ENCODE measurements at regions of chr19 and their contacts with region 1.

Region 1: GRCh38 chr19:18058208-18059030 is 28.3 kb downstream of the IL12RB1 start:
- DNase-seq: no peak
- ATAC-seq: peak; percentile 97
- H3K4me3 ChIP-seq: no peak overlapping the region
- H3K27ac ChIP-seq: no peak overlapping the region
- H3K4me1 ChIP-seq: peaks cover 2% of the 10 kb centered on the region; the same call in 1 of the 2 replicates
- H3K27me3 ChIP-seq: no peaks in the 10 kb centered on the region; a peak in 1 of 4 replicates
- CTCF ChIP-seq: peak; percentile 77 to 86 (median 84)
- EP300 ChIP-seq: no peak
- POLR2A ChIP-seq: no peak
- RAD21 ChIP-seq: peak; percentile 95

Region 2: DNA sequence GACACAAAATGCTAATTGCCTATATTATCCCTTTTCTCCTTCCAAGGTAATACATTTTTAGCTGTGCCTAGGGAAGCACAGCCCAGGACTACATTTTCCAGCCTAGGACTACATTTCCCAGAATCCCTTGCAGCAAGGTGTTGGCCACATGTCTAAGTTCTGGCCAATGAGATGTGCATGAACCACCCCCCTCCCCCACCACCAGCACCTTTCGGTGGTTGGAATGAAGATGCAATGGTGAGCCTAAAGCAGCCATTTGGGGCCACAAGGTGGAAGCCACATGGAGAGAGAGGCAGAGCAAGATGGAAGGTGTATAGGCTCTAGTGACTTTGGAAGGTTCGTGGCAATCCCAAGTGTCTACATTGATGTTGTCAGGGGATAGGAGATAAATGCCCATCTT is 386.5 kb before region 1 on chr19:
- CTCF ChIA-PET with region 1: no interaction called
- POLR2A ChIA-PET with region 1: no interaction called
- RAD21 ChIA-PET with region 1: no interaction called
- SMC1A ChIA-PET with region 1: no interaction called
- in situ Hi-C with region 1: no loop called
- intact Hi-C with region 1: no loop called
- DNase-seq: no peak
- ATAC-seq: peak; percentile 63
- H3K4me3 ChIP-seq: no peak overlapping the region
- H3K27ac ChIP-seq: no peak overlapping the region
- H3K4me1 ChIP-seq: no peaks in the 10 kb centered on the region
- H3K27me3 ChIP-seq: no peaks in the 10 kb centered on the region
- CTCF ChIP-seq: no peak
- EP300 ChIP-seq: no peak
- POLR2A ChIP-seq: no peak
- RAD21 ChIP-seq: no peak

Region 3: GRCh38 chr19:17938092-17938845 is 120.2 kb before region 1 on chr19:
- CTCF ChIA-PET with region 1: interaction called, 12 read pairs
- POLR2A ChIA-PET with region 1: no interaction called
- RAD21 ChIA-PET with region 1: interaction called, 4 read pairs
- SMC1A ChIA-PET with region 1: interaction called, 10 read pairs
- in situ Hi-C with region 1: no loop called
- intact Hi-C with region 1: loop called (anchors 2 kb)
- DNase-seq: no peak
- ATAC-seq: peak; percentile 99
- H3K4me3 ChIP-seq: no peak overlapping the region
- H3K27ac ChIP-seq: no peak overlapping the region
- H3K4me1 ChIP-seq: no peaks in the 10 kb centered on the region; the same call in 1 of the 2 replicates
- H3K27me3 ChIP-seq: no peaks in the 10 kb centered on the region
- CTCF ChIP-seq: peak; percentile 95 to 98 (median 96)
- EP300 ChIP-seq: no peak
- POLR2A ChIP-seq: no peak
- RAD21 ChIP-seq: peak; percentile 94

Region 4: DNA sequence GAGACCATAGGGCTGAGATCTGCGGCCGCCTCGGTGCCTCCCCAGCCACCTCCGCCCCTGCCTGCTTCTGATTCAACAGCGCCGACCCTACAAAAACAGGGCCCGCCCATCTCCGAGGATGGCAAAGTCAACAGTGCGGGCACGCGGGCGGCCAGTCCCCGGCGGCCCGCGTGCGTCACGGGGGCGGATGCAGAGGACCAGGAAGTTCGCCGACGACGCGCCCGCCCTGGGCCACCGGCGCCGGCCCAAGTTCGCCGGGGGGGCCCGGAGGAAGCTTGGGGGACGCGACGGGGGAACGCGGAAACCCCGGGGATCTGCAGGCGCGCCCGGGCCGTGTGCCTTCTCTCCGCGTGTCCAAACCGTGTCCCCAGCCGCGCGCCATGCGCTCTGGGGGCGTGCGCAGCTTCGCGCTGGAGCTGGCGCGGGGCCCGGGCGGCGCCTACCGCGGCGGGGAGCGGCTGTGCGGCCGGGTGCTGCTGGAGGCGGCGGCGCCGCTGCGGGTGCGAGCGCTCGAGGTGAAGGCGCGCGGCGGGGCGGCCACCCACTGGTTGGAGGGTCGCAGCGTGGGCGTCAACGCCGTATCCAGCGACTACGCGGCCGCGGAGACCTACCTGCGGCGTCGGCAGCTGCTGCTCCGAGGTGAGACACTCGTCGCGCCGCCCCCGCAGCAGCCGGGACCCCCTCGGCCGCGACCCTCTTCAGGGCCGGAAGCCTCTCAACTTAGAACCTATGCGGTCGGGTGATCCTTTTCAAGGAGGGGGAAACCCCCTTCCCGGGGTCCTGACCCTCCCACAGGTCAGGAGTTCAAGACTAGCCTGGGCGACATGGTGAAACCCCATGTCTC is 57.3 kb before region 1 on chr19:
- CTCF ChIA-PET with region 1: interaction called, 81 read pairs
- POLR2A ChIA-PET with region 1: interaction called, 11 read pairs
- RAD21 ChIA-PET with region 1: interaction called, 4 read pairs
- SMC1A ChIA-PET with region 1: interaction called, 6 read pairs
- in situ Hi-C with region 1: no loop called
- intact Hi-C with region 1: no loop called
- DNase-seq: no peak
- ATAC-seq: peak; percentile 84
- H3K4me3 ChIP-seq: peak overlapping the region; percentile 75
- H3K27ac ChIP-seq: peak overlapping the region; percentile 62
- H3K4me1 ChIP-seq: peaks cover 5% of the 10 kb centered on the region; the same call in 1 of the 2 replicates
- H3K27me3 ChIP-seq: no peaks in the 10 kb centered on the region
- CTCF ChIP-seq: no peak
- EP300 ChIP-seq: no peak
- POLR2A ChIP-seq: peak; percentile 81
- RAD21 ChIP-seq: no peak

Region 5: DNA sequence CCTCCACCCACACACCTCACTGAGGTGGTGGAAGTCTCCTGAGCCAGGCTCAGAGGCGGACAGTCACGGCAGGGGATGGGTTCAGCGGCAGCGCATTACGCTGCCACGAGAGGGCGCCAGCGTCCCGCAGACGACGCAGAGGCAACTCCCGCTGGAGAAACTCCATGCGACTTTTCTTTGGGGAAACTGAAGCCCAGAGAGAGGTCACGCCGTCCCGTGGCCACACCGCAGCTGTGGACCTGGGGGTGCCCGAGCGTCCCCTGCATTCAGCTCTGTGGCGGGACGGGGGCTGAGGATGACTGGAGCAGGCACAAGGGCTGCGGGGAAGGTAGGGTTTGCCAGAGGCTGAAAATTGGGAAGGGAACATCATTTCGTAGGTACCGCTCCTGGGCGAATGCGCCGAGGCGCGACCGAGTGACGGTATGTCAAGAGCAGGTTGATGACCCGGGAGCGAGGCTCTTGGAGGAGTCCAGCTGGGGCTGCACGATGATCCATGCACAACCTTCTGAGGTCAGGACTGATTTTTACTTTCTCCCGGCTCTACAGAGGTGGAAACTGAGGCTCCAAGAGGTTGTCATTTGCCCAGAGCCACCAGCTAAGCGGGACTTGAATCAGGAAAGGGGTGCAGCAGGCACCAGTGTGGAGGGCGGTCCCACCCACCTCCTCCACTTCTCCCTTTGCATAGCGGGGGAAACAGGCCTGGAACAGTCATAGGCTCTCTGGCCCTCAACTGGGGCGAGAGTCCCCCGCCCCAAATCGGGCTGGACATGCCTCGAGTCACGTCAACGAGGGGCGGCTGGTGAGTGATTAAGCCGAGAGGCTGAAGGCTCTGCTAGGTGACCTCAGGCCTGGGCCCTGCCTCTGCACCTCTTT is 51.1 kb before region 1 on chr19:
- CTCF ChIA-PET with region 1: interaction called, 81 read pairs
- POLR2A ChIA-PET with region 1: interaction called, 3 read pairs
- RAD21 ChIA-PET with region 1: interaction called, 7 read pairs
- SMC1A ChIA-PET with region 1: interaction called, 21 read pairs
- in situ Hi-C with region 1: no loop called
- intact Hi-C with region 1: loop called (anchors 1 kb)
- DNase-seq: no peak
- ATAC-seq: peak; percentile 95
- H3K4me3 ChIP-seq: peak overlapping the region; percentile 45
- H3K27ac ChIP-seq: no peak overlapping the region
- H3K4me1 ChIP-seq: peaks cover 22% of the 10 kb centered on the region
- H3K27me3 ChIP-seq: no peaks in the 10 kb centered on the region
- CTCF ChIP-seq: peak; percentile 95 to 99 (median 98); a peak in 5 of 6 replicates
- EP300 ChIP-seq: no peak
- POLR2A ChIP-seq: no peak; the same call in 1 of the 2 replicates
- RAD21 ChIP-seq: peak; percentile 89

Region 6: GRCh38 chr19:18021121-18021755 is 37.2 kb before region 1 on chr19:
- CTCF ChIA-PET with region 1: interaction called, 5 read pairs
- POLR2A ChIA-PET with region 1: interaction called, 5 read pairs
- RAD21 ChIA-PET with region 1: no interaction called
- SMC1A ChIA-PET with region 1: interaction called, 3 read pairs
- in situ Hi-C with region 1: loop called (anchors 5 kb)
- intact Hi-C with region 1: no loop called
- DNase-seq: no peak
- ATAC-seq: peak; percentile 50
- H3K4me3 ChIP-seq: peak overlapping the region; percentile 66; the same call in 1 of the 2 replicates
- H3K27ac ChIP-seq: peak overlapping the region; percentile 48
- H3K4me1 ChIP-seq: peaks cover 17% of the 10 kb centered on the region
- H3K27me3 ChIP-seq: no peaks in the 10 kb centered on the region
- CTCF ChIP-seq: no peak
- EP300 ChIP-seq: no peak
- POLR2A ChIP-seq: no peak; the same call in 1 of the 2 replicates
- RAD21 ChIP-seq: no peak

Region 7: DNA sequence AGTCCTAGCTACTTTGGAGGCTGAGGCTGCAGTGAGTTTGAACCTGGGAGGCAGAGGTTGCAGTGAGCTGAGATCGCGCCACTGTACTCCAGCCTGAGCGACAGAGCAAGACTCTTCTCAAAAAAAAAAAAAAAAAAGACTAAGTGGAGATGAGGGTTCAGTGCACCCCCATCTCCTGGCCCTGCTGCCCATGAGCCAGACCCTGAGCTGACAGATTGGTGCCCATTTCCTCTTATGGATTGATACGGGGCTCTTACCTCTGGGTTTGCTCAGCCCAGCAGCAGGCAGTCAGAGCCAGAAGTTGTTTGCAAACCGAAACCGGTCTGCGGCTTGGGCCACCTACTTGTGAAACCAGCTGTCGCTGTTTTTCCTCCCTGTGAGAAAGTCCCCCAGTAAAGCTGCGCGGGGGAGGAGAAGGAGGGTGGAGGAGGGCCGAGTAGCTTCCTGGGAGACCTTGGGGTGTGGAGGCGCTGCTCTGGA is 13.6 kb before region 1 on chr19:
- CTCF ChIA-PET with region 1: interaction called, 29 read pairs
- POLR2A ChIA-PET with region 1: interaction called, 5 read pairs
- RAD21 ChIA-PET with region 1: interaction called, 6 read pairs
- SMC1A ChIA-PET with region 1: interaction called, 7 read pairs
- in situ Hi-C with region 1: no loop called
- intact Hi-C with region 1: no loop called
- DNase-seq: peak; percentile 90
- ATAC-seq: peak; percentile 98
- H3K4me3 ChIP-seq: peak overlapping the region; percentile 34; the same call in 1 of the 2 replicates
- H3K27ac ChIP-seq: no peak overlapping the region
- H3K4me1 ChIP-seq: peaks cover 15% of the 10 kb centered on the region
- H3K27me3 ChIP-seq: peaks cover 0 to 3% of the 10 kb centered on the region in 2 experiments; a peak in 2 of 4 replicates
- CTCF ChIP-seq: 0 out of 6 replicates have a peak, but pooled peaks of 1 of the 3 experiments have one; percentile 4
- EP300 ChIP-seq: peak; percentile 86 to 87
- POLR2A ChIP-seq: no peak
- RAD21 ChIP-seq: no peak

Measured in GM12878 (cell line).